IMR-90 (cell line): ENCODE measurements at regions of chr6 and their contacts with region 1.

Region 1: DNA sequence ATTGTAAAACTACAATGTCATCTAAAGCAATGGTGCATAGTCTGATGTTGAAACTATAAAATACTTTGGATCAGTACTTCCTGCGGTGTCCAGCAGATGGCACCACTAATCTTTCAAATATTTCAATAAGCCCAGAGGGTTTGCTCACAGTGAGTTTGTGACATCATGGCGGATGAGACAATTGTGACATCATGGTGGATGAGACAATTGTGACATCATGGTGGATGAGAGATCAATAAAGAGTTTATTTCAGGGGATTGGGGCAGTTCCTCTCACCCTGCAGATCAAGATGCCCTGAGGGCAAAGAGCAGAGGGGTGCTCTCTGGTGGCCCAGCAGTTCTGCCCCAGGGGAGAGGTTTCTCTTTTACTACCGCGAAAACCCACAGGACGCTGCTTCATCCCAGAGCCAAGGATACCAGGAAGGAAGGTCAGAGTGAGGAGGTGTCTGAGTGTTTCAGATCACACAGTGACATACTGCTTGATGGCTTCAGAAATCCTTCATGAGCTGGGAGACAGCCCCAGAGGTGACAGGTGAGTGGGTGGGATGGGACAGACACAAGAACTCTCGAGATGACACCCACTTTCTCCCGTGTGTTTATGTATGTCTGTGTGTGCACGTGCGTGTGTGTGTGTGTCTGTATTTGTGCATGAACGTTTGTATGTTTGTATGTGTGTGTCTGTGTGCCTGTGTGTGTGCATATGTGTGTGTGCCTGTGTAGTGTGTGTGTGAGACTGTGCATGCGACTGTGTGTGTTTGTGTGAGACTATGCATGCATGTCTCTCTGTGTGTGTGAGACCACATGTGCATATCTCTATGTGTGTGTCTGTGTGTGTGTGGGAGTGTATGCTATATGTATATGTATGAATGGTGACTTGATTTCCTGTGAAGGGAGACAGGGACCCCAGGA is 7.3 kb upstream of the ULBP2 start:
- DNase-seq: peak; percentile 77
- ATAC-seq: peak; percentile 77
- H3K4me3 ChIP-seq: no peak overlapping the region
- H3K27ac ChIP-seq: no peak overlapping the region
- H3K4me1 ChIP-seq: peaks cover 4% of the 10 kb centered on the region; the same call in 1 of the 2 replicates
- H3K27me3 ChIP-seq: peaks cover 51% of the 10 kb centered on the region
- CTCF ChIP-seq: peak; percentile 85
- POLR2A ChIP-seq: no peak
- RAD21 ChIP-seq: peak; percentile 77

Region 2: DNA sequence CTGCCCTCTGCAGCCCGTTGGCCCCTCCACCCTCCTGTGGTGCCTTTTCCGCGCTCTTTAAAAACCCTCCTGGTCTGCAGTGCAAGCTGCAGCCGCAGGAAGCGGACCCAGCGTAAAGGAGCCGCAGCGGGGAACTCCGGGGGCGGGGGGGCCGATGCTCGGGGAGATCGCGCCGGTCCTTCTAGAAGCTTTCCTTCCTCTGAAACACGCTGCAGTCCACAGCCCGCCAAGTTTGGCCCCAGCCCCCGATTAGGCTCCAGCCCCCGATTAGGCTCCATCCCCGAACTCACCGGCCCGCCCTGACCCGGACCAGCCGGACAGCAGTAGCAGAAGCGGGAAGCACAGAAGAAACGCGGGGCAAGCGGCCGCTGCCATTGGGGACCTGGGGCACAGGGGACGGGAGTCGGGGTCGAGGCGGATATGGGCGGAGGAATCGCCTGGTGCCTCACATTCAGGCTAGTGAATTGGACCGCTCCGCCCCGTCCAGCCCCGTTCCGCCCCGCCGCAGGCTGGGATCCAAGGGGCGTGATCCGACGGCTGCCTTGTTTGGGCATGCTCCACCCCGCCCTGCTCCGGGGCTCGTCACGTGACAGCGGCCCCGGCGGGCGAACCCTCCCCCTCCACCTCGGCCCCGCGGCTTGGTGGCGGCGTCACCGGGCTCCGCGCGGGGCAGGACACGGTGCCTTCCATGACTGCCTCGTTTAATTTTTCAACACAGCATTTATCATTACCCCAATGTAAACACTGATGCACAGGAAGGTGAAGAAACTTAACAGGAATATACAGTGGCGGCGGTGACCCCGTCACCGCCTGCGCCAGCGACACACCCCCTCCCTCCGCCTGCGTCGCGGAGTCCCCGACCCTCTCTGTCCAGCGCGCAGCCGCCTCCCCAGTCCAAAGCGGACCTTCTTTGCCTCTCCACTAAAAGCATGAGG is 70.5 kb after region 1 on chr6:
- CTCF ChIA-PET with region 1: no interaction called
- POLR2A ChIA-PET with region 1: no interaction called
- dilution Hi-C with region 1: no loop called
- in situ Hi-C with region 1: loop called (anchors 5 kb)
- intact Hi-C with region 1: no loop called
- DNase-seq: peak; percentile 80
- ATAC-seq: peak; percentile 98
- H3K4me3 ChIP-seq: peak overlapping the region; percentile 79
- H3K27ac ChIP-seq: no peak overlapping the region; the same call in 1 of the 2 replicates
- H3K4me1 ChIP-seq: peaks cover 2% of the 10 kb centered on the region; the same call in 1 of the 2 replicates
- H3K27me3 ChIP-seq: peaks cover 58% of the 10 kb centered on the region
- CTCF ChIP-seq: no peak
- POLR2A ChIP-seq: no peak
- RAD21 ChIP-seq: no peak

Region 3: GRCh38 chr6:150016324-150017185 is 82.1 kb after region 1 on chr6:
- CTCF ChIA-PET with region 1: interaction called, 6 read pairs
- POLR2A ChIA-PET with region 1: no interaction called
- dilution Hi-C with region 1: no loop called
- in situ Hi-C with region 1: no loop called
- intact Hi-C with region 1: loop called (anchors 1 kb)
- DNase-seq: peak; percentile 61
- ATAC-seq: peak; percentile 88
- H3K4me3 ChIP-seq: no peak overlapping the region
- H3K27ac ChIP-seq: no peak overlapping the region
- H3K4me1 ChIP-seq: no peaks in the 10 kb centered on the region
- H3K27me3 ChIP-seq: peaks cover 51% of the 10 kb centered on the region
- CTCF ChIP-seq: peak; percentile 63
- POLR2A ChIP-seq: no peak
- RAD21 ChIP-seq: peak; percentile 67

Region 4: DNA sequence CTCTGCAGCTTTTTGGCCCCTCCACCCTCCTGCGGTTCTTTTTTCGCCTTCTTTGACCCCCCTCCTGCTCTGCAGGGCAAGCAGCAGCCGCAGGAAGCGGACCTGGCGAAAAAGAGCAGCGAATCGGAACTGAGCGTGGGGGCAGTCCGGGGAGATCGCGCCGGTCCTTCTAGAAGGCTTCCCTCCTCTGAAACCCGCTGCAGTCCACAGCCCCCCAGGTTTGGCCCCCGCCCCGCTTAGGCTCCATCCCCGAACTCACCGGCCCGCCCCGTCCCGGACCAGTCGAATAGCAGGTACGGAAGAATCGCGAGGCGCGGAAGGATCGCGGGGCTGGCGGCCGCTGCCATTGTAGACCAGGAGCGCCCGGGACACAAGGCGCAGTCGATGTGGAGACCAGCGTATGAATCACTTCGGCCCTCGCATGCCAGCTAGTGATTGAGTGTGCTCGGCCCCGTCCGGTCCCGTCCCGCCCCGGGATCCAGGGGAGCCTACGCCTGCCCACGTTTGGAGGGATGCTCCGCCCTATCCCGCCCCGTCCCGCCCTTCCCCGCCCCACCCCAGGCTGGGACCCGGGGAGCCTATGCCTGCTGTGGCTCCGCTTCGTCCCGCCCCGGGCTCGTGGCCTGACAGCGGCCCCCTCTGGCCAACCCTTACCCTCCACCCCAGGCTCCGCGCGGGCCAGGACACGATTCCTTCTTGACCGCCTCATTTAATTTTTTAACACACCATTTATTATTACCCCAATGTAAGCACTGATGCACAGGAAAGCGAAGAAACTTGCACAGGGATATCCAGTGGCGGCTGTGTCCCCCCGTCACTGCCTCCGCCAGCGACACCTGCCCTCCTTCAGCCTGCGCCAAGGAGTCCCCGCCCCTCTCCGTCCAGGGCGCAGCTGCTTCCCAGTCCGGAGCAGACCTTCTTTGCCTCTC is 134.5 kb after region 1 on chr6 and contains the start of gene ULBP3:
- CTCF ChIA-PET with region 1: no interaction called
- POLR2A ChIA-PET with region 1: no interaction called
- dilution Hi-C with region 1: no loop called
- in situ Hi-C with region 1: no loop called
- intact Hi-C with region 1: loop called (anchors 2 kb)
- DNase-seq: peak; percentile 93
- ATAC-seq: peak; percentile 98
- H3K4me3 ChIP-seq: peak within 1 kb of the TSS; percentile 70
- H3K27ac ChIP-seq: peak within 1 kb of the TSS; percentile 63
- H3K4me1 ChIP-seq: peaks cover 4% of the 10 kb centered on the region; the same call in 1 of the 2 replicates
- H3K27me3 ChIP-seq: peaks cover 1% of the 10 kb centered on the region; the same call in 1 of the 2 replicates
- CTCF ChIP-seq: peak; percentile 56
- POLR2A ChIP-seq: peak; percentile 73
- RAD21 ChIP-seq: peak; percentile 36
- total RNA-seq, gene ULBP3: 35.1 and 43.0 TPM in 2 replicates

Region 5: DNA sequence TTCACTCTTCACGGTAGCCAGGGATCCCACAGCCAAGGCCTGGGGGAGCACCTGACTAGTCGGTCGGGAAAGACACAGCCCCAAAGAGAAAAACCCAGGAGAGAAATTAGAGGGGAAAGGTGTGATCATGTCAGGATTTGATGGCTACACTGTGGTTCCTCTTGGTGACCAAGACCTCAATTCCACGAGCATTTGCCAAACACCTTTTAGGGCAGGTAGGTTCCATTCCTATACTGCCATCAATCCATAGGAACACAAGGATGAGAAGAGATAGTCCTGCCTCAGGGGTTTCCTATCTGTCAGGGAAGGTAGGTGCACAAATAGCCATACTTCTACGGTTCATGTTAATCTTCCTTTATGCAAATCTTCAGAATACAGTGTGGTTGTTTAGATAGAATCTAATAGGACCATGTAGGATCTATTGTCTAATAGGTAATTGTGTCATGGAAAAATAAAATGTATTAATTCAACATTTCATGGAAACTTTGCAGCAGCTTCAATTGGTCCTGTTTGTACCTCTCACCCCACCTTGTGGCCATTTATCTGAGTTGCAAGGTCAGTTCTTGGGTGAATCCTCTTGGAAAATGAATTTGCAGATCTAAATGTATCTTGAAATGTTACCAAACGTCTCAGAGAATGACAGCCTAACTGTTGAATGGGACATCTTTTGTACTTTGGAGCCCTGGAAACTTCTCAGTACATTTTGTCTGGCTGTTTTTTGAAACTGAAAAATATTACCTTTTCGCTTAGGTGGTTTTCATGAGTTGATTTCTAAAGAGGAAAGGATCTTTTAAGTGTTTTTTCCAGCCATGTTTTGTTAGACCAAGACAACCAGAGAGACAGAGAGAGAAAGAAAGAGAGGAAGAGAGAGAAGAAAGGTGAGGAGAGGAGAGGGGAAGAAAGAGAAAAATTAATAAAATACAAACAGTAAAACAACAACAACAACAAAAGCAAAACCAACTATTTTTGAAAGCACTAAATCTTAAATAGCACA is 400.6 kb after region 1 on chr6:
- CTCF ChIA-PET with region 1: no interaction called
- POLR2A ChIA-PET with region 1: no interaction called
- dilution Hi-C with region 1: no loop called
- in situ Hi-C with region 1: loop called (anchors 25 kb)
- intact Hi-C with region 1: loop called (anchors 5 kb)
- DNase-seq: peak; percentile 82
- ATAC-seq: peak; percentile 75
- H3K4me3 ChIP-seq: no peak overlapping the region
- H3K27ac ChIP-seq: no peak overlapping the region
- H3K4me1 ChIP-seq: no peaks in the 10 kb centered on the region
- H3K27me3 ChIP-seq: peaks cover 6% of the 10 kb centered on the region
- CTCF ChIP-seq: peak; percentile 89
- POLR2A ChIP-seq: no peak
- RAD21 ChIP-seq: peak; percentile 90

Region 6: DNA sequence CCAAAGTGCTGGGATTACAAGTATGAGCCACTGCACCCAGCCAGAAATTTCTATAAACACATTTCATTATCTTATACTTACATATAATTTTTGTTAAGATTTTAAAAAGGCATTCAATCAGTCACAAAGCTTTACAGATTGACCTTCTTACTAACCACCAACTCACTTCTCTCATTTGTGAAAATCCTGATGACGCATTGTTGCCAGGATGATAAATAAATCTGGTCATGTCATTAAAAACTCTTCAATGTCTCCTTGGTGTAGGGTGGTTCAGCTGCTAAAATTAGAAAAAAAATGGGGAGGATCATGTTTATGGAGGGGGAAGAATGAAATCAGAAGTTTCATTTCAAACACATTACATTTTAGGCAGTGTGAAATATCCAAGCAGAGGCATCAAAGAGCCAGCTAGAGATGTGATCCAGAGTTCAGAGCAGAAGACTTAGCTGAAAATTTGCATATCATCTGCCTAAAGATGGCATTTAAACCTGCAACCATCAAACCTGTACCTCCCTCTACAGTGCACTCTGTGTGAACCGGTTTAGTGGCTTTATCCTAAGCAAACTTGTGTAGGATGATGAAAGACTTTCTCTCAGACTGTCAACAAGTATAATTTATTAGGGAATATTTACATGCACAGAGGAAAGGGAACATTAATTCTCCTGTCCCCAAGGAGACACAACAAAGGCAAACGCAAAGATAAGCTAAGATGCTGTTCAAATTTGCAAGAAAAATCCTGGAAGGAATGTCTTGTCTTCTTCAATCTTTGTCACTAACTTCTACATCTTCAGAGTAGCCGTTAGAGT is 580.3 kb after region 1 on chr6:
- CTCF ChIA-PET with region 1: no interaction called
- POLR2A ChIA-PET with region 1: no interaction called
- dilution Hi-C with region 1: no loop called
- in situ Hi-C with region 1: no loop called
- intact Hi-C with region 1: no loop called
- DNase-seq: no peak
- ATAC-seq: no peak
- H3K4me3 ChIP-seq: no peak overlapping the region
- H3K27ac ChIP-seq: no peak overlapping the region
- H3K4me1 ChIP-seq: no peaks in the 10 kb centered on the region
- H3K27me3 ChIP-seq: no peaks in the 10 kb centered on the region; the same call in 1 of the 2 replicates
- CTCF ChIP-seq: no peak
- POLR2A ChIP-seq: no peak
- RAD21 ChIP-seq: no peak